Psoas muscle (tissue), 8 donors: ENCODE measurements at regions of chr13 and their contacts with region 1.

Region 1: DNA sequence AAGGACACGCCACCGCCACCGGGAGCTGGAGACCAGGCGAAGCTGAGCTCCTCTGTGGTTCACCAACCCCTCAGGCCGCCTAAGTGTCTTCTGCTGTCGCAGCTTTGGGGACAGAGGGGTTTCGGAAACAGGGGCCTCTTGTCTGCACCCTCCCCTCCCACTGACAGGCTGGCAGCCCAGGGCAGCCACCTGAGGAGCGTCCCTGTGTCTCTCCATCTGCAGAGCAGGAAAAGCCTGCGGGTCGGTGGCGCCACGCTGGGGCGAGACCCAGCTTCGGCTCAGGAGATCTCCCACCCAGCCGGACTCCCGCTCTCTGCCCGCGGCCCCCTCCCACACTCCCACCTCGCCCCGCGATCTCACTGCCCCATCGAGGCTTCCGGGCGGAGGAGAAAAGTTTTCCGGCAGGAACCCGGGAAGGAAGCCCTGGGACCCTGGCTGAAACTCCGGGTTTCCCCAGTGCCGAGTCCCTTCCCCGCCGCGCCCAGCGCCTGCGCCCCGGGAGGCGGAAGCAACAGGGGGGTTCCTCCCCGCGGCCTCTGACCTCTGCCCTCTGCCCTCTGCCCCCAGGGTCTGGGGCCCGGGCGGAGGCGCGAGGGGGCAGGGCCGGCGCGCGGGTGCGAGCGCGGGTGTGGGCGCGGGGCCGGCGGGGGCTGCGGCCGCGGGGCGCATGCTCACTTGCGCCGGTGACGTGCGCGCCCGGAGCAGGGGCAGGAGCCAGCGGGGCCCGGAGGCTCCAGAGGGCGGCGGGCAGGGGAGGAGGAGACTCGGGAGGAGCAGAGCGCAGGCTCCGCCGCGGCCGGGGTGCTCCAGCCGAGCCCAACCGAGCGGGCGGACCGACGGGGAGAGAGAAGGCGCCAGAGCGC is at the start of gene ATP11A:
- DNase-seq: peak; percentile 93 to 96
- ATAC-seq: peak; percentile 87 to 89 (median 87)
- H3K4me3 ChIP-seq: peak within 1 kb of the TSS; percentile 96
- H3K27ac ChIP-seq: peak within 1 kb of the TSS; percentile 92
- H3K4me1 ChIP-seq: peaks cover 23% of the 10 kb centered on the region
- H3K27me3 ChIP-seq: no peaks in the 10 kb centered on the region
- CTCF ChIP-seq: no peak
- total RNA-seq, gene ATP11A: 26.4 to 48.6 (median 28.7) TPM

Region 2: DNA sequence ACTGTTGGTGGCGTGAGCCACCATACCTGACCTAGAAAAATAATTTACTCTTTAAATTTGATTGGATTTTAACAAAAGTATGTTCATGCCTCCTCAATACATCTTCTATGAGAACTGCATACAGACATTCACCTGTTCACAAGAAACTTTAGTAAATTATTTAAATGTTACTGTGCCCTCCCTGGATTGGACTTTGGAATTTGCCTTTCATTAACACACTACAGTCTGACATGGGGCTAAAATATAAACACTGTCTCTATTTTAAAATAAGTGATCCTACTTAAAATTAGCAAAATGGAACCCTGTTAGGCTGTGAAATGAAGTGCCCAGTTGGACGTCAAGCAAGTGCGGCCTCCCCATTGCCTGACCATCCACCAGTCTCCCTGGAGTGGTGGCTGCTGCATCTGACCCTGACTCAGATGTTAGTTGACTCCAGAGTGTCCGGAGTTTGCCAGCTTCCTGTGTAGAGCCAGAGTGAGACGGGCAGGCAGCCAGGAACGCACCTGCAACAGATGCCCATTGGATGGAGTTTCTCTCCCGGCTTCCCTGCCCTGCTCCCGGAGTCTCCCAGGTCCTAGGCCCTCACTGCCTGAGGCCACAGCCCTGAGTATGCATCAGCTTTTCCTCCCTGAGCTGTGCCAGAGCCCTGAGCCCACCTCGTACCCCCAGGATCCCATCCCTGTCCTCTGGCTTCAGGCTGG is 45.6 kb before region 1 on chr13:
- intact Hi-C with region 1: loop called in 1 of 2 experiments (anchors 5 kb)
- DNase-seq: no peak
- ATAC-seq: no peak
- H3K4me3 ChIP-seq: no peak overlapping the region
- H3K27ac ChIP-seq: no peak overlapping the region
- H3K4me1 ChIP-seq: no peaks in the 10 kb centered on the region
- H3K27me3 ChIP-seq: peaks cover 0 to 12% (median under 1%) of the 10 kb centered on the region in 3 donors
- CTCF ChIP-seq: no peak

Region 3: GRCh38 chr13:112711528-112712265 is 22.2 kb after region 1 on chr13:
- intact Hi-C with region 1: loop called in 1 of 2 experiments (anchors 2 kb)
- DNase-seq: peak; percentile 83 to 87
- ATAC-seq: peak; percentile 92 to 95 (median 92)
- H3K4me3 ChIP-seq: peak overlapping the region; percentile 48
- H3K27ac ChIP-seq: peak overlapping the region; percentile 90
- H3K4me1 ChIP-seq: peaks cover 17% of the 10 kb centered on the region
- H3K27me3 ChIP-seq: no peaks in the 10 kb centered on the region
- CTCF ChIP-seq: peak; percentile 18

Region 4: DNA sequence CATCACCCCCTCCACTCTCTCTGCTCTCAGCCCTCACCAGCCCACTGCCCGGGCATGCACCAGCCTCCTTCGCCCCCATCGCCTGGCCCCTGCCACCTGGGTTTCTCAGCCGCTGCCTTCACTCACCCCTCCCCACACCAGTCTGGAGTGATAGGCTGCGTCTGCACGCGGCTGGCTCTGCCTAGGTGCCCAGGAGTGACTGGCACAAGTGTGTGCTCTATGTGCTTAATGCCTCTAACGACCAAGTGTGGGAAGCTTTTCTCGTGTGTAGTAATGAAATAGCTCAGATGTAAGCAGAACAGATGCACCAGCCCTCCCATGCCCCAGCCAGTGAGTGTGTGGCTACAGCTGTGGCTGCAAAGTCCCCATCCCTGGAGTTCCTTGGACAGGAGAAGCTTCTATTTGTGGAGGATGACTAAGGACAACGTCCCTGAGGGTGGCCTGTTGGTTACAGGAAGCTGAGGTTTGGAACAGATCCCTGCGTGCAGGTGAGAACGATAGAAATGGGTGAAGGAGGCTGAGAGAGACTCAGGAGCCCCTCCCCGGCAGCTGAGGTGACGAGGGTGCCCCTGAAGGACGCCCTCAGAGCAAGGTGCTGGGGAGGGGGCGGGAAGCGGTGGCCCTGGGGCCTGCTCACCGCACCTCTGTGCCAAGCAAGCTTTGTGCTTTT is 35.9 kb after region 1 on chr13:
- intact Hi-C with region 1: loop called (anchors 5 kb)
- DNase-seq: peak; percentile 47 to 84
- ATAC-seq: peak; percentile 81 to 93 (median 86)
- H3K4me3 ChIP-seq: no peak overlapping the region
- H3K27ac ChIP-seq: peak overlapping the region; percentile 83
- H3K4me1 ChIP-seq: peaks cover 59% of the 10 kb centered on the region
- H3K27me3 ChIP-seq: no peaks in the 10 kb centered on the region
- CTCF ChIP-seq: no peak

Region 5: GRCh38 chr13:112740502-112741131 is 51.1 kb after region 1 on chr13:
- intact Hi-C with region 1: loop called in 1 of 2 experiments (anchors 5 kb)
- DNase-seq: peak; percentile 80 to 89
- ATAC-seq: peak; percentile 91 to 94 (median 94)
- H3K4me3 ChIP-seq: no peak overlapping the region
- H3K27ac ChIP-seq: peak overlapping the region; percentile 75
- H3K4me1 ChIP-seq: peaks cover 26% of the 10 kb centered on the region
- H3K27me3 ChIP-seq: no peaks in the 10 kb centered on the region
- CTCF ChIP-seq: no peak